Stomach (tissue), 19 donors: ENCODE measurements at regions of chr6 and their contacts with region 1.

Region 1: GRCh38 chr6:108113557-108114519 is 39.3 kb upstream of the OSTM1 start:
- DNase-seq: peak in 1 of 2 donors; percentile 78
- H3K4me3 ChIP-seq: peak overlapping the region; percentile 22 to 53 (median 25)
- H3K27ac ChIP-seq: no peak overlapping the region
- H3K4me1 ChIP-seq: peaks cover 45 to 56% (median 50%) of the 10 kb centered on the region in 4 donors
- H3K27me3 ChIP-seq: peaks cover 16 to 96% (median 55%) of the 10 kb centered on the region in 3 donors
- CTCF ChIP-seq: peak in 4 of 7 experiments; percentile 21 to 72 (median 32)
- EP300 ChIP-seq: no peak
- POLR2A ChIP-seq: no peak

Region 2: GRCh38 chr6:108030211-108030610 is 83.6 kb before region 1 on chr6:
- intact Hi-C with region 1: no loop called
- DNase-seq: no peak
- H3K4me3 ChIP-seq: no peak overlapping the region
- H3K27ac ChIP-seq: no peak overlapping the region
- H3K4me1 ChIP-seq: no peaks in the 10 kb centered on the region
- H3K27me3 ChIP-seq: no peaks in the 10 kb centered on the region
- CTCF ChIP-seq: no peak
- EP300 ChIP-seq: no peak
- POLR2A ChIP-seq: no peak

Region 3: DNA sequence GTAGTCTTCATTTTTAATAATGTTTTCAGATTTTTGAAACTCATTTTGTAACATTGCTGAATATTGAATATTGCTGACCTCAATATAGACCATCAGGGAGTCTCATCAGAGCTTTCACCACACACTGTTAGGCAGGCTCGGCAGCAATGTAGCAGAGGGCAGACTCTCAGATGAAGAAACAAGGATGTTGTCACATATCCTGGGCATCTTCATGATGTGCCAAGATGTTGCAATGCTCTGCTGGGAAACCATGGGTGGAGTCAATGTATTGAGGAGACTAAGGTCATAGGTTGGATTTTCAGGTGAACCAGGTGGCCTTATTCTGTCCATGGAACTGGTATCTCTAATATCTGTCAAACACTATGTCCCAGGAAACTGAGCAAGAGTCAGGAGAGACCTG is 79.3 kb after region 1 on chr6:
- intact Hi-C with region 1: no loop called
- DNase-seq: no peak
- H3K4me3 ChIP-seq: no peak overlapping the region
- H3K27ac ChIP-seq: no peak overlapping the region
- H3K4me1 ChIP-seq: no peaks in the 10 kb centered on the region
- H3K27me3 ChIP-seq: peaks cover 0 to 4% (median 0%) of the 10 kb centered on the region in 3 donors
- CTCF ChIP-seq: no peak
- EP300 ChIP-seq: no peak
- POLR2A ChIP-seq: no peak

Region 4: GRCh38 chr6:108260809-108261569 is 147.2 kb after region 1 on chr6 and contains the start of gene SNX3:
- intact Hi-C with region 1: loop called (anchors 5 kb)
- DNase-seq: peak; percentile 96 to 99
- H3K4me3 ChIP-seq: peak within 1 kb of the TSS; percentile 80 to 95 (median 90)
- H3K27ac ChIP-seq: peak within 1 kb of the TSS; percentile 74 to 99 (median 95)
- H3K4me1 ChIP-seq: peaks cover 11 to 47% (median 33%) of the 10 kb centered on the region in 4 donors
- H3K27me3 ChIP-seq: no peaks in the 10 kb centered on the region
- CTCF ChIP-seq: peak in 1 of 7 experiments; percentile 26
- EP300 ChIP-seq: no peak
- POLR2A ChIP-seq: no peak
- total RNA-seq, gene SNX3: 46.1 to 166 (median 86.4) TPM

Region 5: GRCh38 chr6:108492131-108492766 is 378.4 kb after region 1 on chr6:
- intact Hi-C with region 1: loop called (anchors 10 kb)
- DNase-seq: peak in 1 of 2 donors; percentile 70
- H3K4me3 ChIP-seq: no peak overlapping the region
- H3K27ac ChIP-seq: no peak overlapping the region
- H3K4me1 ChIP-seq: no peaks in the 10 kb centered on the region
- H3K27me3 ChIP-seq: no peaks in the 10 kb centered on the region
- CTCF ChIP-seq: peak in 4 of 7 experiments; percentile 26 to 56 (median 35)
- EP300 ChIP-seq: no peak
- POLR2A ChIP-seq: no peak

Region 6: GRCh38 chr6:108526739-108527174 is 412.9 kb after region 1 on chr6:
- intact Hi-C with region 1: loop called (anchors 10 kb)
- DNase-seq: peak in 1 of 2 donors; percentile 64
- H3K4me3 ChIP-seq: no peak overlapping the region
- H3K27ac ChIP-seq: no peak overlapping the region
- H3K4me1 ChIP-seq: peaks cover 0 to 9% (median 0%) of the 10 kb centered on the region in 4 donors
- H3K27me3 ChIP-seq: no peaks in the 10 kb centered on the region
- CTCF ChIP-seq: peak in 5 of 7 experiments; percentile 68 to 80 (median 72)
- EP300 ChIP-seq: no peak
- POLR2A ChIP-seq: no peak